Breast epithelium (tissue), 4 donors: ENCODE measurements at regions of chrX and their contacts with region 1.

Region 1: DNA sequence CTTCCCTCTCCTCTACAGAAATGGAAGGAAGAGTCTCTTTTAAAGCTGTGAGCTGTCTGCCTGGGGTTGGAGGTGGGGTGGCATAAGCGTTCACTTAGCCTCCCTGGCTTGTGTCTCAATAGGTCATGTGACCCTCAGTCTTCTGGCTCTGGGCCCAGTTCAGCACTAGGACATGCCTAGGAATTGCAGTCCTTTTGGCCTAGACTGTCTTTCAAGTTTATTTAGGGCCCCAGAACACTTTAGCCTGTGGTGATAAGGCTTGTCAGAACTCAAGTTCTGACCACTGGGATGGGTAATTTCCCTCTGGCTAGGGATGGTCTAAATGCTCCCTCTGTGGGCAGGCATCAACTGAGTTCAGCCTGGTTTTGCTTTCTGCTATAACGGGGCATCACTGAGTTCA is 34.3 kb upstream of the ARMCX4 start:
- DNase-seq: no peak
- H3K4me3 ChIP-seq: no peak overlapping the region
- H3K27ac ChIP-seq: peak overlapping the region in 1 of 2 donors; percentile 46
- H3K4me1 ChIP-seq: no peaks in the 10 kb centered on the region
- H3K27me3 ChIP-seq: no peaks in the 10 kb centered on the region
- CTCF ChIP-seq: no peak
- POLR2A ChIP-seq: no peak

Region 2: GRCh38 chrX:101040197-101040596 is 410.8 kb before region 1 on chrX:
- intact Hi-C with region 1: loop called (anchors 10 kb)
- DNase-seq: no peak
- H3K4me3 ChIP-seq: no peak overlapping the region
- H3K27ac ChIP-seq: no peak overlapping the region
- H3K4me1 ChIP-seq: no peaks in the 10 kb centered on the region
- H3K27me3 ChIP-seq: peaks cover 0 to 4% of the 10 kb centered on the region in 2 donors
- CTCF ChIP-seq: no peak
- POLR2A ChIP-seq: no peak

Region 3: DNA sequence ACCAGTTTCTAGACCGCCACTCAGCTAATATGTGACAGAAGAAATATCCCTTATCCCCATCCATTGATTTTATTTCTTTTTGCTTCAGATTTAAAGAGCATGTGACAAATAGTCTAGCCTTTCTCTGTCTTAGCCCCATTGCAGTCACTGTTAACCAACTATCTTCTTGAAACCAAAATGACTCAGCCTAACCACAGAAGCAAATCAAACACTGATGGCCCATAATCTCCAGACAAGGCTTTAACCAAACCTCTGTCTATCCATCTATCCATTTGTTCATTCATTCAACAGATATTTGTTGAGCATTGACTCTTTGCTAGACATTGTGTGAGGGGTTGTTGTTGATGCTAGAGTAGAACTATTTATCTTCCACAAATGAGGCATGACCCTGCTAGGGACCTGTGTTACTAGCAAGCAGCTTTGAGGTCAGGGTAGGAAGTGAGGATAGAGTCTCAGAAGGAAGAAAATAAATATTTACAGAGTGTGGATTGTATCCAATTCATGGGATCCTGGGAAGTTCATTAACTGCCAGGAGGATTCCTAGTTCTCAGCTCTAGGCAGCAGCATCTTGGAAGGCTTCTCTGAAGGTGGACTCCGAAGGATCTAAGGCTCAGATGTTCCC is 20.4 kb before region 1 on chrX:
- intact Hi-C with region 1: no loop called
- DNase-seq: no peak
- H3K4me3 ChIP-seq: no peak overlapping the region
- H3K27ac ChIP-seq: no peak overlapping the region
- H3K4me1 ChIP-seq: no peaks in the 10 kb centered on the region
- H3K27me3 ChIP-seq: peaks cover 0 to 6% of the 10 kb centered on the region in 2 donors
- CTCF ChIP-seq: no peak
- POLR2A ChIP-seq: no peak